A549 (cell line): ENCODE measurements at regions of chr11 and their contacts with region 1.

Region 1: GRCh38 chr11:58513747-58514367 is 6.0 kb upstream of the OR5B21 start:
- DNase-seq: peak; percentile 33 to 75
- ATAC-seq: peak; percentile 95 to 98
- H3K4me3 ChIP-seq: no peak overlapping the region
- H3K27ac ChIP-seq: no peak overlapping the region
- H3K4me1 ChIP-seq: no peaks in the 10 kb centered on the region
- CTCF ChIP-seq: peak; percentile 78
- EP300 ChIP-seq: no peak
- POLR2A ChIP-seq: no peak
- RAD21 ChIP-seq: peak; percentile 83 to 86

Region 2: GRCh38 chr11:58503361-58503856 is 10.4 kb before region 1 on chr11:
- CTCF ChIA-PET with region 1: interaction called, 10 read pairs
- POLR2A ChIA-PET with region 1: no interaction called
- DNase-seq: no peak
- ATAC-seq: no peak
- H3K4me3 ChIP-seq: no peak overlapping the region
- H3K27ac ChIP-seq: no peak overlapping the region
- H3K4me1 ChIP-seq: no peaks in the 10 kb centered on the region
- CTCF ChIP-seq: no peak
- EP300 ChIP-seq: no peak
- POLR2A ChIP-seq: no peak
- RAD21 ChIP-seq: no peak

Region 3: GRCh38 chr11:58524232-58525036 is 10.6 kb after region 1 on chr11:
- CTCF ChIA-PET with region 1: interaction called, 31 read pairs
- POLR2A ChIA-PET with region 1: no interaction called
- DNase-seq: peak; percentile 71 to 85
- ATAC-seq: peak; percentile 98 to 99
- H3K4me3 ChIP-seq: peak overlapping the region; percentile 19; the same call in 1 of the 3 replicates
- H3K27ac ChIP-seq: peak overlapping the region in 1 of 2 experiments; percentile 30; a peak in 1 of 6 replicates
- H3K4me1 ChIP-seq: 0 out of 3 replicates have a peak, but pooled peaks cover 3% of the 10 kb centered on the region
- CTCF ChIP-seq: peak; percentile 77
- EP300 ChIP-seq: no peak
- POLR2A ChIP-seq: no peak
- RAD21 ChIP-seq: peak; percentile 64 to 70